Transverse colon (tissue), 4 donors: ENCODE measurements at regions of chr10 and their contacts with region 1.

Region 1: GRCh38 chr10:89643431-89644331 is 1.4 kb downstream of the PANK1 start:
- DNase-seq: peak; percentile 89
- H3K4me3 ChIP-seq: peak overlapping the region; percentile 70 to 91 (median 82)
- H3K27ac ChIP-seq: peak overlapping the region; percentile 90 to 99 (median 94)
- H3K4me1 ChIP-seq: peaks cover 10 to 36% (median 22%) of the 10 kb centered on the region in 4 donors
- H3K27me3 ChIP-seq: no peaks in the 10 kb centered on the region
- CTCF ChIP-seq: no peak
- EP300 ChIP-seq: no peak
- POLR2A ChIP-seq: peak; percentile 97

Region 2: DNA sequence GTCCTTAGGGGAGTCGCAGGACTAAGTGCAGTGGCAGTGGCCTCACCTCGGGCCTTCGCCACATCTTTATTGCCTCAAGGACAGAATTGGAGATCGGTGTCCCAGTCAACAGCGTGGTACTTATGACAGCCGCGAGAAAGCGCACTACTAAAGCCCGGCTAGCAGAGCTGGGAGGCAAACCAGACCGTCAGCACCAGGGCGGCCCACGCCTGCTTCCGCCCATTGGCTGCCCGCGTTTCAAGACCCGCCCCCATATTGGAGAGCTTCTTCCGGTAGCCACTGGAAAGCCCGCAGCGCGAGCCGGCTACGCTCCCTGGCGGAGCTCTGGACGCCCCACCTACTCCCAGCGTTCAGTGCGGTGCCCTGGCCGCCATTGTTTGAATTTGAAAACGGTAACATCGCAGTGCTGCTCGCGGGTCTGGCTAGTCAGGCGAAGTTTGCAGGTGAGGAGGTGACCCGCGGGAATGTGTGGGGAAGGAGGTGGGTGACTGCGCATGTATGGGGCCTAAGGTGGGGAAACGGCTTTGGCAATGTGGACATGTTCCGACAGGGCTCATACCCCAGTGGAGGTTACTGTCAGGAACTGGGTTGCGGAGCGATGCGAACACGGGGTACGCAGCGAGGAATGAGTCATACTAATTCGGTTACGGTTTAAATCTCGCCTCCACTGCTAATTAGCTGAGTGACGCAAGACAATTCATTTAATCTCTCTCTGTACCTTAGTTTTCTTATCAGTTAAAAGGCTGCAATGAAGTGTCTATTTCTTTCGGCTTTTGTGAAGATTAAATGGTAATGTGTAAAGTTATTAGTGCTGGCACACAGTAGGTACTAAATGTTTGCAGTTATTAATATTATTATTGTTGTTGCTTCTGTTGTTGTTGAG is 57.8 kb after region 1 on chr10 and contains the start of gene KIF20B:
- in situ Hi-C with region 1: no loop called
- intact Hi-C with region 1: loop called (anchors 5 kb)
- DNase-seq: peak; percentile 96
- H3K4me3 ChIP-seq: peak within 1 kb of the TSS; percentile 50 to 71 (median 54)
- H3K27ac ChIP-seq: peak within 1 kb of the TSS; percentile 80 to 87 (median 84)
- H3K4me1 ChIP-seq: peaks cover 5 to 30% (median 9%) of the 10 kb centered on the region in 4 donors
- H3K27me3 ChIP-seq: no peaks in the 10 kb centered on the region
- CTCF ChIP-seq: peak in 4 of 5 experiments; percentile 23 to 74 (median 38)
- EP300 ChIP-seq: no peak
- POLR2A ChIP-seq: peak; percentile 75
- total RNA-seq, gene KIF20B: 0.37 to 3.3 (median 2.5) TPM